ENCODE measurements at regions of chr17 and their contacts with region 1.

Region 1: DNA sequence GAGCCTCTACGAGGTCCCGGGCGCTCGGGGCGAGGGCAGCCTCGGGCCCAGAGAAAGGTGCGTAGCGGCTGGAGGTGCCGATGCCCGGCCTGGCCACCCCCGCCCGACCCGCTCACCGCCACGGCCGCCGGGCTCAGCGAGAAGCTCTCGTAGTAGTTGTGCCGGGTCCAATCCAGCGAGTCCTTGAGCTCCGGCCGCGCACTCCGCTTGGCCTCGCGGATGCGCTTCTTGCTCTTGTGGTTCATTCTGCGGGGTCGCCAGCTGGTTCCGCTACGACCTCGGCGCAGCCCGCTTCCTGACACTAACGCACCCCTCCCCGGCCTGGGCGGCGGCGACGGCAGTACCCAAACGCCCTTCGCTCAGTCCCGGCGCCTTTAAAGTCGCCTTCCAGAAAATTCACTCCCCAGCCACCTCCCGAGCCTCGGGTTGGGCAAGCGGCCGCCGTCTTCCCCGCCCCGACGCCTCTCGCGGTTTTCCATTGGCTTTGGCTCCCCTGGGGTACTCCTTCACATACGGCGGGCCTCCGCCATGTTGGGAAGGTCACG is at the start of gene JMJD6:
- DNase-seq: peak in 5 of 9 donors; percentile 92 to 95 (median 93)
- ATAC-seq: peak; percentile 88
- H3K4me3 ChIP-seq: peak within 1 kb of the TSS; percentile 90
- H3K4me3 Mint-ChIP-seq: peak within 1 kb of the TSS; percentile 93 to 100 (median 98)
- H3K27ac ChIP-seq: peak within 1 kb of the TSS; percentile 97
- H3K27ac Mint-ChIP-seq: peak within 1 kb of the TSS; percentile 98 to 99 (median 99)
- H3K4me1 ChIP-seq: peaks cover 36 to 45% of the 10 kb centered on the region in 2 donors
- H3K4me1 Mint-ChIP-seq: peaks cover 19 to 76% (median 43%) of the 10 kb centered on the region in 7 donors
- H3K27me3 ChIP-seq: no peaks in the 10 kb centered on the region
- H3K27me3 Mint-ChIP-seq: no peaks in the 10 kb centered on the region
- total RNA-seq, gene JMJD6: 39.9 to 132 (median 58.3) TPM

Region 2: DNA sequence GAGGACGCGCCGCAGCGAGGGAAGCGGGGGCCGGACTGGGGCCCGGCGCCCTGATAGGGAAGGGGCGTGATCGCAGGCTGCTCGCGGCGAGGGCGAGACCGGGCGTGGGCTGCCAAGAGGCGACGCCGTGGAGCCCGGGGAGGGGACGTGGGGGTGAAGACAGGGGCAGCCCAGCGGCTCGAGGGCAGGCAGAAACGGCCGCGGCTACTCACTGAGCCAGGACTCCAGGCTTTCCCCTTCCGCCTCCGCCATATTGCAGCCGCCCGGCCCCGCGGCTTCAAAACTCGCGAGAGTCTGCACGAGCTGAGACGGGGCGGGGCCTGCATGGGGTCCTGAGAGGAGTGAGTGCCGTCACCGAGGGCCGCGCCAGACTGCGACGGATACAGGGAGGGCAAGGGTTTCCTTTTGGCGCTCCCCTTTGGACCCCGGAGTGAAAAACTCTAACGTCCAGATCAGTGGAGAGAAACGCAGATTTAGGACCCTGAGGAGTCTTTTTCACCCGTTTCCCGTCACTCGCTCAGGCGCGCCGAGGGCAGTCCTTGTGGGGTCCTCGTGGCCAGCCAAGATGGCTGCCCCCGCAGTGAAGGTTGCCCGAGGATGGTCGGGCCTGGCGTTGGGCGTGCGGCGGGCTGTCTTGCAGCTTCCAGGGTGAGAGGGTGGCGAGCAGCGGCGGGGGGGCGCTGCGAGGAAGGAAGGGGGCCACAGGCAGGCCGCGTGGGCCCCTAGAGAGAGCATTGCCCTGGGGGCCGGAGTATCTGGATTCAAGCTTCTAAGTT is 1464.8 kb before region 1 on chr17 and contains the starts of genes GGA3 and MRPS7:
- CTCF ChIA-PET with region 1: no interaction called
- POLR2A ChIA-PET with region 1: no interaction called
- intact Hi-C with region 1: loop called in 1 of 2 experiments (anchors 2 kb)
- DNase-seq: peak; percentile 94 to 98 (median 96)
- ATAC-seq: peak; percentile 97
- H3K4me3 ChIP-seq: peak within 1 kb of the TSS; percentile 98
- H3K4me3 Mint-ChIP-seq: peak within 1 kb of the TSS; percentile 94 to 100 (median 97)
- H3K27ac ChIP-seq: peak within 1 kb of the TSS; percentile 99
- H3K27ac Mint-ChIP-seq: peak within 1 kb of the TSS; percentile 100
- H3K4me1 ChIP-seq: peaks cover 23% of the 10 kb centered on the region in 2 donors
- H3K4me1 Mint-ChIP-seq: peaks cover 40 to 65% (median 62%) of the 10 kb centered on the region in 7 donors
- H3K27me3 ChIP-seq: no peaks in the 10 kb centered on the region
- H3K27me3 Mint-ChIP-seq: no peaks in the 10 kb centered on the region
- total RNA-seq, gene GGA3: 79.6 to 128 (median 87.4) TPM
- total RNA-seq, gene MRPS7: 29.2 to 70.1 (median 34.4) TPM

Region 3: DNA sequence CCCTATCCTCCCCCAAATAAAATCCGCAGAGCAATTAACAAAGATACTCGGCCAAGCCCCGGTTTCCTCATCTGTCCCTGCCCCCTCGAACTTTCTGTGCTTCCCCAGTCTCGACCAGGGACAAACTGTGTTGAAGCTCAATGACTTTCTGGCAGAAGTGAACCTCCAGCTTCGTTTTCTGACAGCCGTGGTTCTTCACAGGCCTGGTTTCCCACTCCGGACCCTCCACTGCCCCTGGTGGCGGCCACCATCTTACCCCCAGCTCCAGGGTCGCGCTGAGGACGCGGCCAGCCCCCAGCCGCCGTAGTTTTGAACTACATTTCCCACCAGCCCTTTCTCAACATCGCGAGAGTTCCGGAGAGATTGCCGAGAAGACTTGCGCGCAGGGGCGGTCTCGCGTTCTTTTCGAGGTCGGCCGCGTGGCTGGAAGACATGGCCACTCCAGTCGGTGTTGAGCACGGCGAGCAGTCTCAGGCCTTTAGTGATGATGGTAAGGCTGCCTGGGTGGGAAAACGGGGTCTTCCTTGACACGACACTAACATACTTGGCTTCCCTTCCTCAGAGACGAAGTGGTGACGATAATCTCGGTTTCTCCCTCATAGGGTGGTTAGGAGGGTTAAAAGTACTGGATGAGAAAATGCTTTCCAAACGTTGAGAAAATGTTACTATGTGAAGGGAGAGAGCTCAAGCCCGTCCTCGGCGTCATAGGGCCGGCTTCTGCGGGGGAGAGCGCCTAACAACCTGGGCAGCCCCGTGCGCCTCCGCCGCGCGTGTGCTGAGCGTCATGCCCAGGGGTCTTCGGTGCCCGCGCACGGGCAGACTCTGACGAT is 168.7 kb before region 1 on chr17:
- CTCF ChIA-PET with region 1: no interaction called
- POLR2A ChIA-PET with region 1: no interaction called
- intact Hi-C with region 1: loop called (anchors 1 to 5 kb)
- DNase-seq: peak; percentile 82 to 95 (median 92)
- ATAC-seq: peak; percentile 92
- H3K4me3 ChIP-seq: peak overlapping the region; percentile 77
- H3K4me3 Mint-ChIP-seq: peak overlapping the region; percentile 92 to 99 (median 98)
- H3K27ac ChIP-seq: peak overlapping the region; percentile 93
- H3K27ac Mint-ChIP-seq: peak overlapping the region; percentile 90 to 99 (median 96)
- H3K4me1 ChIP-seq: peaks cover 23 to 34% of the 10 kb centered on the region in 2 donors
- H3K4me1 Mint-ChIP-seq: peaks cover 25 to 66% (median 55%) of the 10 kb centered on the region in 7 donors
- H3K27me3 ChIP-seq: no peaks in the 10 kb centered on the region
- H3K27me3 Mint-ChIP-seq: no peaks in the 10 kb centered on the region

Region 4: GRCh38 chr17:76659928-76660614 is 66.2 kb before region 1 on chr17:
- CTCF ChIA-PET with region 1: no interaction called
- POLR2A ChIA-PET with region 1: no interaction called
- intact Hi-C with region 1: no loop called
- DNase-seq: peak in 3 of 9 donors; percentile 5 to 18 (median 18)
- ATAC-seq: peak; percentile 80
- H3K4me3 ChIP-seq: peak overlapping the region; percentile 6
- H3K4me3 Mint-ChIP-seq: peak overlapping the region; percentile 12 to 70 (median 51)
- H3K27ac ChIP-seq: no peak overlapping the region
- H3K27ac Mint-ChIP-seq: peak overlapping the region in 3 of 9 donors; percentile 10 to 88 (median 70)
- H3K4me1 ChIP-seq: peaks cover 21 to 31% of the 10 kb centered on the region in 2 donors
- H3K4me1 Mint-ChIP-seq: peaks cover 20 to 35% (median 27%) of the 10 kb centered on the region in 7 donors
- H3K27me3 ChIP-seq: no peaks in the 10 kb centered on the region
- H3K27me3 Mint-ChIP-seq: peaks cover 0 to 10% (median 0%) of the 10 kb centered on the region in 5 donors

Region 5: DNA sequence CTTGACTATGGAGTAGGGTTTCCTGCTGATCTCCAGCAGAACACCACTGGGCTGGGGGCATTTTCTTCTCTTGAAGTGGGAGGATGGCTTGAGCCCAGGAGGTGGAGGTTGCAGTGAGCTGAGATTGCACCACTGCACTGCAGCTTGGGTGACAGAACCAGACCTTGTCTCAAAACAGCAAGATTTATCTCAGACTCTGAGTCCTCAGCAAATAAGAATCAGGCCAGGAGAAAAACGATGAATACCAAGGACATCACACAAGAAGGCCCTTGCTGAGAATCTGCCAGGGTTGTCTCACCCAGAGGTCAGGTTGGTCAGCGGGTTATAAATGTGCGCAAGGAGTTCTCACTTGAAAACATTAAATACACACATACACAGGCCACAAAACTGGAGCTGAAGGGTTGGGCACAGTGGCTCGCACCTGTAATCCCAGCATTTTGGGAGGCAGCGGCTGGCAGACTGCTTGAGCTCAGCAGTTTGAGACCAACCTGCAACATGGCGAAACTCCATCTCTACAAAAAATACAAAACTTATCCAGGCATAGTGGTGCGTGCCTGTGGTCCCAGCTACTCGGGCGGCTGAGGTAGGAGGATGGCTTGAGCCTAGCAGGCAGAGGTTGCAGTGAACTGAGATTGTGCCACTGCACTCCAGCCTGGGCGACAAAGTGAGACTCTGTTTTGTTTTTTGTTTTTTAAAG is 23.2 kb before region 1 on chr17:
- CTCF ChIA-PET with region 1: no interaction called
- POLR2A ChIA-PET with region 1: no interaction called
- intact Hi-C with region 1: no loop called
- DNase-seq: no peak
- ATAC-seq: no peak
- H3K4me3 ChIP-seq: no peak overlapping the region
- H3K4me3 Mint-ChIP-seq: no peak overlapping the region
- H3K27ac ChIP-seq: no peak overlapping the region
- H3K27ac Mint-ChIP-seq: no peak overlapping the region
- H3K4me1 ChIP-seq: no peaks in the 10 kb centered on the region
- H3K4me1 Mint-ChIP-seq: peaks cover 0 to 5% (median 0%) of the 10 kb centered on the region in 7 donors
- H3K27me3 ChIP-seq: no peaks in the 10 kb centered on the region
- H3K27me3 Mint-ChIP-seq: peaks cover 0 to 4% (median 0%) of the 10 kb centered on the region in 5 donors

Region 6: DNA sequence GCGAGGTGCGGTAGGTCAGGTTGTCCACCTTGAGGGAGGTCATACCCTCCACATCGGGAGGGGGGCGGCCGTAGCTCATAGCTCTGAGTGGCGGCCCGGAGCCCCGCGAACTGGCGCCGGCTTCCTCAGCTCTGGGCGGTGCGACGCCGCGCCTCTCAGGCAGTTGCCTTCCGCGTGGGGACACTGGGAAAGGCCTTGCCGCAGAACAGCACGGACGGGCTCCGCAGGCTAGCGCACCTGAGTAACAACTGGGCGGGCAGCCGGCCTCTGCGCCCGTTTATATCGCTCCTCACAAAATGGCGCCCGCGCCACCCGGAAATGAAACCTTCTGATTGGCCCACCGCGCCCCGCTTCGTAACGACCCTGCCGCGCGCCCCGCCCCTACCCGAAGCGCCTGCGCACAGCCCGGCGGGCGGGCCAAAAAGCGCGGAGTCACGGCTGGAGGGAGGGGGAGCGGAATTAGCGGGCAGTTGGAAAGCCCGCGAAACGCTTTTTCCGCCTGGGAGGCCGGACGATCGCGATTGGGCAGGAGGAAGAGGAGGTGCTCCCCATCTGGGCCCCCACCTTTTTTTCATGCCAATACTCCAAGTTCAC is 10.9 kb after region 1 on chr17 and contains the start of gene SRSF2:
- CTCF ChIA-PET with region 1: interaction called, 11 read pairs
- POLR2A ChIA-PET with region 1: interaction called, 187 read pairs
- intact Hi-C with region 1: loop called (anchors 1 kb)
- DNase-seq: peak; percentile 98 to 100 (median 99)
- ATAC-seq: peak; percentile 86
- H3K4me3 ChIP-seq: peak within 1 kb of the TSS; percentile 97
- H3K4me3 Mint-ChIP-seq: peak within 1 kb of the TSS; percentile 90 to 99 (median 97)
- H3K27ac ChIP-seq: peak within 1 kb of the TSS; percentile 96
- H3K27ac Mint-ChIP-seq: peak within 1 kb of the TSS; percentile 95 to 100 (median 99)
- H3K4me1 ChIP-seq: peaks cover 45 to 49% of the 10 kb centered on the region in 2 donors
- H3K4me1 Mint-ChIP-seq: peaks cover 26 to 66% (median 58%) of the 10 kb centered on the region in 7 donors
- H3K27me3 ChIP-seq: no peaks in the 10 kb centered on the region
- H3K27me3 Mint-ChIP-seq: no peaks in the 10 kb centered on the region
- total RNA-seq, gene SRSF2: 327 to 363 (median 351) TPM

Region 7: DNA sequence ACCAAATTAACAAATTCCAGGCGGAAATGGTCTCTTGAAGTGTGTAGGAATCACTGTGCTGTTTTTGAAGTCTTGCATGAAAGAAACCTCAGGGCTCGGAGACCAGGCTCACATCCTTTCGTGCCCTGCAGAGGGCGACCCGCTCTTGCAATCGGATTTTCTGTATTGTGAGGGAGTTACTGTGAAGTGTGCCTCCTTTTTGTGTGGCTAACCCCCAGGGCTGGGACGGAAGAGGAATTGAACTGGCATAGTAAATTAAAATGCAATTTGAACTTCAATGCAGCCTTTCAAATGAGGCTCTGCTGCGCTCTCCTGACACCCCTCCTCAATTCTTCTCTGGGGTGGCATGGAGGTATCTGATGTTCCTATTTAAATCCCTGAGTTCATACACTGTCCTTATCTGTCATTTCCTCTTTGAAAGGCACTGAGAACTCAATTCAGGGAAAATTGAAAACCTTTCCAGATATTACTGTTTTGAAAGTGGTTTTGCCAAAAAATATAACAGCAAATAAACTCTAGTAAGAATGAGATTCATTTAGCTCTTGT is 90.4 kb after region 1 on chr17:
- CTCF ChIA-PET with region 1: no interaction called
- POLR2A ChIA-PET with region 1: no interaction called
- intact Hi-C with region 1: loop called in 1 of 2 experiments (anchors 1 kb)
- DNase-seq: peak; percentile 22 to 78 (median 66)
- ATAC-seq: peak; percentile 91
- H3K4me3 ChIP-seq: no peak overlapping the region
- H3K4me3 Mint-ChIP-seq: peak overlapping the region in 5 of 10 donors; percentile 14 to 58 (median 36)
- H3K27ac ChIP-seq: no peak overlapping the region
- H3K27ac Mint-ChIP-seq: peak overlapping the region in 6 of 9 donors; percentile 9 to 44 (median 16)
- H3K4me1 ChIP-seq: peaks cover 0 to 7% of the 10 kb centered on the region in 2 donors
- H3K4me1 Mint-ChIP-seq: peaks cover 4 to 13% (median 8%) of the 10 kb centered on the region in 7 donors
- H3K27me3 ChIP-seq: no peaks in the 10 kb centered on the region
- H3K27me3 Mint-ChIP-seq: peaks cover 0 to 19% (median 0%) of the 10 kb centered on the region in 5 donors

Region 8: GRCh38 chr17:77068915-77069314 is 342.6 kb after region 1 on chr17:
- CTCF ChIA-PET with region 1: no interaction called
- POLR2A ChIA-PET with region 1: interaction called, 3 read pairs
- intact Hi-C with region 1: loop called in 1 of 2 experiments (anchors 5 kb)
- DNase-seq: no peak
- ATAC-seq: no peak
- H3K4me3 ChIP-seq: no peak overlapping the region
- H3K4me3 Mint-ChIP-seq: no peak overlapping the region
- H3K27ac ChIP-seq: no peak overlapping the region
- H3K27ac Mint-ChIP-seq: no peak overlapping the region
- H3K4me1 ChIP-seq: no peaks in the 10 kb centered on the region
- H3K4me1 Mint-ChIP-seq: peaks cover 0 to 6% (median 0%) of the 10 kb centered on the region in 7 donors
- H3K27me3 ChIP-seq: no peaks in the 10 kb centered on the region
- H3K27me3 Mint-ChIP-seq: peaks cover 18 to 42% (median 29%) of the 10 kb centered on the region in 5 donors

Region 9: GRCh38 chr17:78128551-78129350 is 1402.4 kb after region 1 on chr17 and contains the start of gene TMC6:
- CTCF ChIA-PET with region 1: no interaction called
- POLR2A ChIA-PET with region 1: interaction called, 4 read pairs
- intact Hi-C with region 1: loop called in 1 of 2 experiments (anchors 5 kb)
- DNase-seq: peak in 8 of 9 donors; percentile 76 to 88 (median 82)
- ATAC-seq: peak; percentile 45
- H3K4me3 ChIP-seq: peak within 1 kb of the TSS; percentile 95
- H3K4me3 Mint-ChIP-seq: peak within 1 kb of the TSS; percentile 89 to 100 (median 99)
- H3K27ac ChIP-seq: peak within 1 kb of the TSS; percentile 77
- H3K27ac Mint-ChIP-seq: peak within 1 kb of the TSS; percentile 95 to 99 (median 97)
- H3K4me1 ChIP-seq: peaks cover 56 to 59% of the 10 kb centered on the region in 2 donors
- H3K4me1 Mint-ChIP-seq: peaks cover 19 to 53% (median 39%) of the 10 kb centered on the region in 7 donors
- H3K27me3 ChIP-seq: no peaks in the 10 kb centered on the region
- H3K27me3 Mint-ChIP-seq: peaks cover 0 to 3% (median 0%) of the 10 kb centered on the region in 5 donors
- total RNA-seq, gene TMC6: 574 to 808 (median 773) TPM